MCF 10A (cell line): ENCODE measurements at regions of chr6 and their contacts with region 1.

Region 1: DNA sequence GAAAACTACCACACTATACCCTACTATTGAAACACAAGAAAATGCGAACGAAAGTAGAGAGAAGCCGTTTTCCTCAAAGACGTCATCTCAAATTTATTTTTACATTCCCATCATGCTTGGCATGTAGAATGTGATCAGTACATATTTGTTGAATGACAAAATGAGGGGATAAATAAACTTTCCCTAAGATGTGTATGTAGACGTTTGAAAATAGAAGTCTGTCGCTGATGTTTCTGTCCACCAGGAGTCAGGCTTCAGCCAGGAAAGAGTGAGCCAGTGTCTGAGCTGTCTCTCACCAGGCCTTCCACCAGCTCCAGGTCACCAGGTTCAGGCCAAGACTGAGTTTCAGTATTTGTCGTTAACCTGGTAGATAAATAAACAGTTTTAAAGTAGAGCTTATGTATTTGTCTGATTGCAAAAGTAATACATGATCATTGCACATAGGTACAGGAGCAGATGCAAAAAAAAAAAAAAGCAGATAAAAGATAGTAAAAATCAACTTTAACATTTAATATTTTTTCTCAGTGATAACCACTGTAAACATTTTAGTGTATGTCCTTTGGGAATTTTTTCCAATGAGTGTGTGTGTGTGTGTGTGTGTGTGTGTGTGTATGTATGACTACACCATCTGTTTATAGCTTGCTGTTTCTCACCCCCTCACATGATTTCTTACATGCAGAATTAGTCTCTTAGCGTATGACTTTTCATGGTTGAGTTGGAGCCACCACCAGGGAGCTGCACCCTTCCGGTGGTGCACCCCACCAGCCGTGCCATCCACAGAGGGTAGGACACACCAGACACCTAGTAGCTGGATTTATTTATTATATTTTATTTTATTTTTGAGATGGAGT is 26.2 kb downstream of the WRNIP1 start:
- DNase-seq: peak; percentile 83
- H3K4me3 Mint-ChIP-seq: no peak overlapping the region
- H3K27ac Mint-ChIP-seq: peak overlapping the region; percentile 75
- H3K4me1 Mint-ChIP-seq: peaks cover 27% of the 10 kb centered on the region
- H3K27me3 Mint-ChIP-seq: no peaks in the 10 kb centered on the region
- CTCF ChIP-seq: peak; percentile 82

Region 2: GRCh38 chr6:2695454-2696095 is 95.8 kb before region 1 on chr6:
- CTCF ChIA-PET with region 1: no interaction called
- POLR2A ChIA-PET with region 1: no interaction called
- intact Hi-C with region 1: no loop called
- DNase-seq: peak; percentile 43
- H3K4me3 Mint-ChIP-seq: no peak overlapping the region
- H3K27ac Mint-ChIP-seq: no peak overlapping the region
- H3K4me1 Mint-ChIP-seq: no peaks in the 10 kb centered on the region
- H3K27me3 Mint-ChIP-seq: no peaks in the 10 kb centered on the region
- CTCF ChIP-seq: peak; percentile 64

Region 3: DNA sequence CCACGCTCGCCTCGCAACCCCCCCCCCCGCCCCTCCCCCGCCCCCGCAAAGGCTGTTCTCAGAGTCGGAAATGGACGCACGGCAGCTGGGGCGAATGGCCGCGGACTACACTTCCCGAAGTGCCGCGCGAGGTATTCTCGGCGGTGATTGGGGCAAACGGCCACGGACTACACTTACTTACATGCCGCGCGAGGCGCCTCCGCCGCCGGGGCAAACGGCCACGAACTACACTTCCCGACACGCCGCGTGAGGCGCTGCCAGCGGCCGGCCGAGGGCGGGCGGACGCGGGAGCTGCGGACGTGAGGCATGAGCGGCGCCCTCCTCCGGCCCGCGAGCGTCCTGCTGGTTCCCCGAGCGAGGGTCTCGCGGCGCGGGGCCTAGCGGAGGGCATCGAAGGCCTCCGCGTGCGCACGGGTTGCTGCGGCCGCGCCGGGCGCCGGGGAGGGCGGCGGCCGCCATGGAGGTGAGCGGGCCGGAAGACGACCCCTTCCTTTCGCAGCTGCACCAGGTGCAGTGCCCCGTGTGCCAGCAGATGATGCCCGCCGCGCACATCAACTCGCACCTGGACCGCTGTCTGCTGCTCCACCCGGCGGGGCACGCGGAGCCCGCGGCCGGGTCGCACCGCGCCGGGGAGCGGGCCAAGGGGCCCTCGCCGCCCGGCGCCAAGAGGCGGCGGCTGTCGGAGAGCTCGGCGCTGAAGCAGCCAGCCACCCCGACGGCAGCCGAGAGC is 26.0 kb before region 1 on chr6 and contains the start of gene WRNIP1:
- CTCF ChIA-PET with region 1: interaction called, 4 read pairs
- POLR2A ChIA-PET with region 1: interaction called, 28 read pairs
- intact Hi-C with region 1: no loop called
- DNase-seq: peak; percentile 98
- H3K4me3 Mint-ChIP-seq: peak within 1 kb of the TSS; percentile 71
- H3K27ac Mint-ChIP-seq: peak within 1 kb of the TSS; percentile 98
- H3K4me1 Mint-ChIP-seq: peaks cover 24% of the 10 kb centered on the region
- H3K27me3 Mint-ChIP-seq: no peaks in the 10 kb centered on the region
- CTCF ChIP-seq: peak; percentile 43
- total RNA-seq, gene WRNIP1: 33.4 and 44.8 TPM in 2 replicates

Region 4: GRCh38 chr6:2810092-2810671 is 18.8 kb after region 1 on chr6:
- CTCF ChIA-PET with region 1: interaction called, 10 read pairs
- POLR2A ChIA-PET with region 1: interaction called, 15 read pairs
- intact Hi-C with region 1: loop called (anchors 2 kb)
- DNase-seq: peak; percentile 99
- H3K4me3 Mint-ChIP-seq: peak overlapping the region; percentile 24
- H3K27ac Mint-ChIP-seq: peak overlapping the region; percentile 84
- H3K4me1 Mint-ChIP-seq: peaks cover 24% of the 10 kb centered on the region
- H3K27me3 Mint-ChIP-seq: no peaks in the 10 kb centered on the region
- CTCF ChIP-seq: no peak

Region 5: DNA sequence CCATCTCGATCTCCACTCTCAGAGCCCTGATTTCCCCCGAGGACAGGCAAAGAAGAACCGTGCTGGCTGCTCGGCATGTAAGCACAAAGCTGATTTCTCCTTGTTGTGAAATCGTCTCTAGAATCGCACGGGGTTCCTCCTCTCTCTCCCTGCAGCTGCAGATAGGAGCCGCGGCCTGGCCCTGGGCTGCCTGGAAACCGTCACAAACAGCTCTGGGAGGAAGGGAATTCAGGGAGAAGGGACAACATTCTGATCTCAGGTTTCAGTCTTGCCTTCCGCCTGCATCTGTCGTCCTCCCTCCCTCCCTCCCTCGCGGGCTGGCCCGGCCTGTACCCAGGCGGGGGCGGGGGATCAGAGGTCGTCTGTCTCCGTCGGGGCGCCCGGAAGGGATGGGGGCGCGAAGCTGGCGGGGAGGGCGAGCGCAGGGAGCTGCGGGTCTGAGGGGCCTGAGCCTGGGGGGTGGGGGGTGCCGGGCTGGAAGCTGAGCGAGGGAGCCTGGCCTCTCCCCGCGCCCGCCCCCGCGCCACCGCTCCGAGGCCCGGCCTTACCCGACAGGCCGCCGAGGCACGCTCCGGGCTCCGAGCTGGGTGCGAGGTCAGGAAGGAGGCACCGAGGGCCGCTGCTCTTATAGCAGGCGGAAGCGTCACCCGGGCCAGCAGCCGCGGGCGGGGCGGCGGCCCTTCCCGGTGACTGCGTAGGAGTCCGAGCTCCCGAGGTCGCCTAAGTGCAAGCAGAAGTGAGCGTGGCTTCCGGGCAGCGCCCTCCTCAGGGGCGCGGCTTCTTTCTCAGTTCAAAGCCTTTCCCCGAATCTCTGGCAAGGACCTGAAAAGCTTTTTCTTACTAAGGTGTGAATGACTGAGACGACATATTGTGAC is 50.2 kb after region 1 on chr6 and contains the start of gene SERPINB1:
- CTCF ChIA-PET with region 1: interaction called, 39 read pairs
- POLR2A ChIA-PET with region 1: interaction called, 33 read pairs
- intact Hi-C with region 1: loop called (anchors 1 kb)
- DNase-seq: peak; percentile 93
- H3K4me3 Mint-ChIP-seq: peak within 1 kb of the TSS; percentile 88
- H3K27ac Mint-ChIP-seq: peak within 1 kb of the TSS; percentile 96
- H3K4me1 Mint-ChIP-seq: peaks cover 31% of the 10 kb centered on the region
- H3K27me3 Mint-ChIP-seq: no peaks in the 10 kb centered on the region
- CTCF ChIP-seq: no peak
- total RNA-seq, gene SERPINB1: 20.8 and 28.0 TPM in 2 replicates

Region 6: DNA sequence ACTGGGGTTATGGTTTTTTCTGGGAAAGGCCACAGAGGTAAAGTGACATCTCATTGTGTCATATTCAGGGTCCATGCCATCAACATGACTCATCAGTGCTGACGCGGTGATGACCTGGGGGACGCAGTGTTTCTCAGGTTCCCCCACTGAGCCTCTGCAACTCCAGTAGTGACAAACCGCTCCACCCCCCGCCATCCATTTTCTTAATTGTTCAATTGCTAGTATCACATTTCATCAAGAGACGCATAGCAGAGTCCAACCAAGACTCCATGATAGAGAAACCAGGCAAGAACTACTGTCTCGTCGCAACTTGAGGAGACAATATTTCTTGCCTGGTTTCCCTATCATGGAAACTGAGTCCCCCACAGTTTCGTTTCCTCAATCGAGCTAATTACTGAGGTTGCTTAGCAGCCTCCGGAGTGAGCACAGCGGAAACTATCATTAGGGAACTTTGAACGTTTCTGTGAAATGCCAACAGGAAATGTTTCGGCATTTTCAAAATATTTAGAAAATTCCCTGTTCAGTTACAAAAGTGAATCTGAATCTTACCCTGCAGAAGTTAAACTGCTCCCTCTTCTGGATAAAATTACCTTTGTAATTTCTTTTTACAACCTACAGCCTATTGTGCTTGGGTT is 62.5 kb after region 1 on chr6:
- CTCF ChIA-PET with region 1: interaction called, 31 read pairs
- POLR2A ChIA-PET with region 1: interaction called, 3 read pairs
- intact Hi-C with region 1: loop called (anchors 1 kb)
- DNase-seq: peak; percentile 69
- H3K4me3 Mint-ChIP-seq: peak overlapping the region; percentile 50
- H3K27ac Mint-ChIP-seq: no peak overlapping the region
- H3K4me1 Mint-ChIP-seq: peaks cover 1% of the 10 kb centered on the region
- H3K27me3 Mint-ChIP-seq: no peaks in the 10 kb centered on the region
- CTCF ChIP-seq: peak; percentile 42

Region 7: GRCh38 chr6:2931970-2932748 is 140.8 kb after region 1 on chr6:
- CTCF ChIA-PET with region 1: interaction called, 50 read pairs
- POLR2A ChIA-PET with region 1: interaction called, 3 read pairs
- intact Hi-C with region 1: loop called (anchors 1 kb)
- DNase-seq: peak; percentile 88
- H3K4me3 Mint-ChIP-seq: no peak overlapping the region
- H3K27ac Mint-ChIP-seq: no peak overlapping the region
- H3K4me1 Mint-ChIP-seq: no peaks in the 10 kb centered on the region
- H3K27me3 Mint-ChIP-seq: no peaks in the 10 kb centered on the region
- CTCF ChIP-seq: peak; percentile 94